ENCODE measurements at regions of chr3 and their contacts with region 1.

Region 1: DNA sequence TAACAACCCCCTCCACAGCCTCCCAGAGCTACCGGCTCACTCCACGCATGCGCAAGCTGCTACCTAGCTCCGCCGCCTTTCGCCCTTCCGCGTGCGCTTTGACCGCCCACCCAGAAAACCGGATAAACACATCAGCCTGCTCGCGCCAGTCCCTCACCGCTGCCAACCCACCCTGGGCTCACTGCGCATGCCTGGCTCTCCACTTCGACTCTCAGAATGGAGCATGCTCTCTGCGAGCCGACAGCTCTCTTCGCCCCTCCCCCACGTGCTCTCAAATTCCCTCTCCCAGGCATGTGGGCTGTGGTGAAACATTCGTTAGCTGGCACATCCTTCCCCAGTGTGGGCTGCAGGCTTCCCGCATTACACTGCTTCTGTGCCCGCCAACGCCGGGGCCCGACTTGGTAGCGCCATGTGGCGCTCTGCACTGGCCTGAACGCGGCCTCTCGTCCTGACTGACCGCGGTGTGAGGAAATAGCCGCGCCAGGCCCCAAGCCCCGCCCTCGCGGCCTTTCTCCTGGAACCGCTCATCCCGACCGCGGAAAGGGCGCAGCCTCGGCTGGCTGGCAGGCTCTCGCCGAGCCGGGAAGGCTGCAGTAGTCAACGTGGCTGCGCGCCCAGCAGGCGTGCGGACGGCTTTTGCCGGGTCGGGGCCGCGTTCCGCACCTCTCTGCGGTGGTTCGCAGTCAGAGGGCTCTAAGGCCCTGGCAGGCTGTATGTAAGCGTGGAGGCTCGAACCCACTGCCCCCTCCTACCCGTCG is 445 bp upstream of the MSL2 start:
- DNase-seq: peak; percentile 96 to 99
- H3K4me3 ChIP-seq: peak overlapping the region; percentile 69 to 93
- H3K27ac ChIP-seq: peak overlapping the region; percentile 99 to 100
- H3K4me1 ChIP-seq: peaks cover 3 to 18% of the 10 kb centered on the region in 2 donors
- H3K27me3 ChIP-seq: no peaks in the 10 kb centered on the region
- CTCF ChIP-seq: no peak

Region 2: DNA sequence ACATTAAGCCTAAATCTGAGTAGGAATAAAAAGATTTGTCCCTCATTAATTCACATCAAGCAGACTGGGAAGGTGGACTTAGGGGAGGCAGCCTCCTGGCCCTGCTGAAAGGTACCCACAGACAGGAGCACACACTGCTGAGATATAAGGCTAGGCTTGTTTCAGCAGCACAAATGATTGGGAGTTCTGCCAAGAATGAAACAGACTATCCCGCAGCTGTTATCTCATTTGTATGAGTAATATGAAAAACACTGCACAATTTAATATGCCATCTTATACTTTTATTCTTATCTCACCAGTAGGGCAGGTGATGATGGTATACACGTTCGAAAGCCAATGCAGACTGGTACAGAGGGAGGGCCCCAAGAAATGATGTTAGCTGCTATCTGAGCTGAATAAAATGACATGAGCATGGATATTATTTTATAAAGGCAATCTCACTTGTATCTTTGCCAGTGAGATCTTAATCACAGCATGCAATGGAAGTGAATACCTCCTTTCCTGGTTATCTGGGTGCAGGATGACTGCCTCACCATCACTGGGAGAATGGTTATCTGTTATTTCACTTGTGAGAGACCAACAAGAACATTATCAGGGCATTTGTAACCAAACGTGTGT is 489.7 kb before region 1 on chr3:
- intact Hi-C with region 1: no loop called
- DNase-seq: no peak
- H3K4me3 ChIP-seq: no peak overlapping the region
- H3K27ac ChIP-seq: no peak overlapping the region
- H3K4me1 ChIP-seq: no peaks in the 10 kb centered on the region
- H3K27me3 ChIP-seq: no peaks in the 10 kb centered on the region
- CTCF ChIP-seq: no peak

Region 3: GRCh38 chr3:135992072-135992471 is 204.5 kb before region 1 on chr3:
- intact Hi-C with region 1: loop called (anchors 10 kb)
- DNase-seq: peak in 1 of 2 donors; percentile 66
- H3K4me3 ChIP-seq: no peak overlapping the region
- H3K27ac ChIP-seq: peak overlapping the region; percentile 62 to 84
- H3K4me1 ChIP-seq: peaks cover 4 to 17% of the 10 kb centered on the region in 2 donors
- H3K27me3 ChIP-seq: no peaks in the 10 kb centered on the region
- CTCF ChIP-seq: no peak

Region 4: GRCh38 chr3:136075218-136075808 is 121.3 kb before region 1 on chr3:
- intact Hi-C with region 1: loop called (anchors 5 kb)
- DNase-seq: peak; percentile 10 to 87
- H3K4me3 ChIP-seq: no peak overlapping the region
- H3K27ac ChIP-seq: no peak overlapping the region
- H3K4me1 ChIP-seq: peaks cover 6 to 15% of the 10 kb centered on the region in 2 donors
- H3K27me3 ChIP-seq: no peaks in the 10 kb centered on the region
- CTCF ChIP-seq: peak; percentile 87 to 91 (median 90)

Region 5: GRCh38 chr3:136142592-136142991 is 54.0 kb before region 1 on chr3:
- intact Hi-C with region 1: loop called (anchors 2 kb)
- DNase-seq: no peak
- H3K4me3 ChIP-seq: no peak overlapping the region
- H3K27ac ChIP-seq: peak overlapping the region; percentile 57 to 59
- H3K4me1 ChIP-seq: peaks cover 0 to 8% of the 10 kb centered on the region in 2 donors
- H3K27me3 ChIP-seq: no peaks in the 10 kb centered on the region
- CTCF ChIP-seq: no peak

Region 6: GRCh38 chr3:136250226-136250902 is 53.8 kb after region 1 on chr3 and contains the start of gene PCCB:
- intact Hi-C with region 1: loop called (anchors 1 kb)
- DNase-seq: peak; percentile 65 to 96
- H3K4me3 ChIP-seq: peak within 1 kb of the TSS; percentile 60 to 81
- H3K27ac ChIP-seq: peak within 1 kb of the TSS; percentile 80 to 90
- H3K4me1 ChIP-seq: peaks cover 0 to 3% of the 10 kb centered on the region in 2 donors
- H3K27me3 ChIP-seq: no peaks in the 10 kb centered on the region
- CTCF ChIP-seq: peak; percentile 81 to 92 (median 85)
- total RNA-seq, gene PCCB: 114 TPM

Region 7: GRCh38 chr3:136512381-136512780 is 315.8 kb after region 1 on chr3:
- intact Hi-C with region 1: no loop called
- DNase-seq: no peak
- H3K4me3 ChIP-seq: no peak overlapping the region
- H3K27ac ChIP-seq: no peak overlapping the region
- H3K4me1 ChIP-seq: peaks cover 4 to 6% of the 10 kb centered on the region in 2 donors
- H3K27me3 ChIP-seq: no peaks in the 10 kb centered on the region
- CTCF ChIP-seq: no peak

Measured in ascending aorta (tissue), 2 donors.